AG04449 (cell line): ENCODE measurements at regions of chr5 and their contacts with region 1.

Region 1: DNA sequence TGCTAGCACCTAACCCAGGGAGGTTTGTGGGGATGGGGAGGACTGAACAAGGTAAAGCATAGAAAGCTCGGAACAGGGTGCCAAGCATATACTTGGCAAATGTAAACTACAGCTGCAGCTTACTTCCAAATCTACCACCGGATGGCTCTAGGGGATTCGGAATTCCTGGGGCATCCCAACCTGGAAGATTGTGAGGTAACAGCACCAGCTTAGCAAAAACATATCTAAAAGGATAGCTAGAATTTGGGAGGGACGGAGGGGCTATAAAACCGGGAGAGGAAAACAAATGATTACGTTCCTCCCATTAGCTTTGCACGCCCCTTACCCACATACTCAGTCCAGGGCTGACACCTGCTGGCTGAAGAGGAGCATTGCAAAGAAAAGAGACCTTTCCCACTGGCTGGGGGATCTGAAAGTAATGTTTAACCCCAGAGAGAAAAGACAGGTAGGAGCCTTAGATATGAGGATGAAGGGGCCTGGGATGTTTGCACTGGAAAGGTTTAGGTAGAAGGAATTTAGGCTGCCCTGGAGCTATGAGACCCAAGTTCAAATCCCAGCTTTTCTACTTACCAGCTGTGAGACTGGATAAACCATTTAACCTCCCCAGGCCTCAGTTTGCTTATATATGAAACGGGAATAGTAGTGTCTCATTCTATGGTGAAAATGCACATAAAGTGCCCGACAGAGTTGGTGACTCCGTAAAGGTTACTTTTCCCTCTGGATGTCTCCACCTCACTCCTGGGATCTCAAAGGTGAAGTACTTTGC is 73.6 kb downstream of the FAM114A2 start:
- DNase-seq: no peak
- H3K4me3 ChIP-seq: peak overlapping the region; percentile 29; the same call in 1 of the 2 replicates
- CTCF ChIP-seq: peak; percentile 90

Region 2: GRCh38 chr5:152532714-152533113 is 1432.3 kb before region 1 on chr5:
- CTCF ChIA-PET with region 1: interaction called, 186 read pairs
- POLR2A ChIA-PET with region 1: no interaction called
- DNase-seq: peak; percentile 24
- H3K4me3 ChIP-seq: no peak overlapping the region
- CTCF ChIP-seq: peak; percentile 13

Region 3: GRCh38 chr5:152560512-152561137 is 1404.4 kb before region 1 on chr5:
- CTCF ChIA-PET with region 1: interaction called, 126 read pairs
- POLR2A ChIA-PET with region 1: no interaction called
- DNase-seq: peak; percentile 3
- H3K4me3 ChIP-seq: no peak overlapping the region
- CTCF ChIP-seq: peak; percentile 69

Region 4: GRCh38 chr5:153501983-153502382 is 463.1 kb before region 1 on chr5:
- CTCF ChIA-PET with region 1: interaction called, 78 read pairs
- POLR2A ChIA-PET with region 1: interaction called, 3 read pairs
- DNase-seq: no peak
- H3K4me3 ChIP-seq: no peak overlapping the region
- CTCF ChIP-seq: no peak

Region 5: GRCh38 chr5:153782589-153783361 is 182.3 kb before region 1 on chr5:
- CTCF ChIA-PET with region 1: interaction called, 14 read pairs
- POLR2A ChIA-PET with region 1: no interaction called
- DNase-seq: peak; percentile 16
- H3K4me3 ChIP-seq: no peak overlapping the region
- CTCF ChIP-seq: peak; percentile 19

Region 6: DNA sequence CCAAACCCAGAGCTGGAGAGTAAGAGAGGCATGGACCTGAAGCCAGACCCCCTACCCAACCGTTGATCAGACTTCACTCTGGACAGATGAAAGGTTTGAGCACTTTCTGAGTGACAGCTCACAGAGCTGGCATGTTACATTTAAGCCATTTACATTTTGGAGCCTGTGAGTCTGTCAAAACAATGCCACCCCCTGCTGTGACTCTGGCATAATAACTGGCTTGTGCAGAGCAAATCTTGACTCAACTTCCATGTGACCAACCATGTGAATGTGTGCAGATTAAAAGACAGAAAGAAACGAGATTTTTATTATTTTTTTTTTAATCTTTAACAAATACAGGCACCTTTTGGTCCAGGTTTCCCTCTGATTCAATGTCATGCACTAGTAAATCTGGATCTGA is 122.2 kb after region 1 on chr5:
- CTCF ChIA-PET with region 1: no interaction called
- POLR2A ChIA-PET with region 1: no interaction called
- DNase-seq: no peak
- H3K4me3 ChIP-seq: no peak overlapping the region
- CTCF ChIP-seq: no peak